Transverse colon (tissue), 4 donors: ENCODE measurements at regions of chr22 and their contacts with region 1.

Region 1: DNA sequence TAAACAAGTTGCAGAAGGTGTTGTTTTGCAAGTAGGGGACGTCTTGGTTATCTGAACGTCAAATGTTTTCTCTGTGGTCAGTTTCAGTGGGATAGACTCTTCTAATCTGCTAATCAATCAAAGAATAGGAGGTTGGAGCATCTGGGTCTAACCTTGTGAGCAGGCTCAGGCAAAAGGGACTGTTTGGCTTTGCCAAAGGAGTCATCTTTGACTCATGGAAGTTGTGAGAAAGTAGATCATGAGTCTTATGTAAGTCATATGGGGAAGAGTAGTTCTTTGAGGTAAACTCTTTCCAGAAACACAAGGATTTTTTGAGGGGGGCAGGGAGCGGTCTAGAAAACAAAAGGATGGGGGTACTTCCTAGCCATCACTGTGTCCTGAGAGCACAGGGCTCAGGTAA is 27.1 kb upstream of the TOP3B start:
- DNase-seq: no peak
- H3K4me3 ChIP-seq: no peak overlapping the region
- H3K27ac ChIP-seq: no peak overlapping the region
- H3K4me1 ChIP-seq: no peaks in the 10 kb centered on the region
- H3K27me3 ChIP-seq: peaks cover 8% of the 10 kb centered on the region
- CTCF ChIP-seq: no peak
- EP300 ChIP-seq: no peak
- POLR2A ChIP-seq: no peak

Region 2: DNA sequence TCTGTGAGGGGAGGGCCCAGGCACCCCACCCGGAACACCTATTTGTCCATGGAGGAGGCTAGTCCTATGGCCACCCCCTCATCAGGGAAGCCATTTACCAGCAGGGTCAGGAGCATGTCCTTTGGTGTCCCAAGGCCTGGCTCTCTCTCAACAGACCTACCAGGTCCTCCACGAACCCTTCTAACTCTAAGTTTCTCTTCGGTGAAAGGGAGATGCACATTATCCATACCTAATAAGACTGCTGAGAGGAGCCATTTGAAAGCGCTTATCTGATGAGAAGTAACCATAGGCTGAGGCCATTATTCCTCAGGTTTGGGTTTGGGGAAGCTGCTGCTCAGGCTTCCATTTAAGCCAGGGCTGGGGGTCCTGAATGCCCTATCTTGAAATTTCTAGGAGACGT is 17.9 kb before region 1 on chr22:
- in situ Hi-C with region 1: no loop called
- intact Hi-C with region 1: loop called (anchors 1 kb)
- DNase-seq: no peak
- H3K4me3 ChIP-seq: no peak overlapping the region
- H3K27ac ChIP-seq: no peak overlapping the region
- H3K4me1 ChIP-seq: no peaks in the 10 kb centered on the region
- H3K27me3 ChIP-seq: no peaks in the 10 kb centered on the region
- CTCF ChIP-seq: no peak
- EP300 ChIP-seq: no peak
- POLR2A ChIP-seq: no peak